ENCODE measurements at regions of chr19 and their contacts with region 1.

Region 1: GRCh38 chr19:11587302-11587974 is 9.8 kb upstream of the ZNF627 start:
- DNase-seq: peak; percentile 88
- ATAC-seq: peak; percentile 75
- H3K4me3 ChIP-seq: no peak overlapping the region
- H3K4me3 Mint-ChIP-seq: no peak overlapping the region
- H3K27ac ChIP-seq: no peak overlapping the region
- H3K27ac Mint-ChIP-seq: peak overlapping the region; percentile 32
- H3K4me1 ChIP-seq: peaks cover 34 to 51% of the 10 kb centered on the region in 2 donors
- H3K4me1 Mint-ChIP-seq: peaks cover 39% of the 10 kb centered on the region
- H3K27me3 ChIP-seq: no peaks in the 10 kb centered on the region
- H3K27me3 Mint-ChIP-seq: no peaks in the 10 kb centered on the region
- CTCF ChIP-seq: peak; percentile 82

Region 2: DNA sequence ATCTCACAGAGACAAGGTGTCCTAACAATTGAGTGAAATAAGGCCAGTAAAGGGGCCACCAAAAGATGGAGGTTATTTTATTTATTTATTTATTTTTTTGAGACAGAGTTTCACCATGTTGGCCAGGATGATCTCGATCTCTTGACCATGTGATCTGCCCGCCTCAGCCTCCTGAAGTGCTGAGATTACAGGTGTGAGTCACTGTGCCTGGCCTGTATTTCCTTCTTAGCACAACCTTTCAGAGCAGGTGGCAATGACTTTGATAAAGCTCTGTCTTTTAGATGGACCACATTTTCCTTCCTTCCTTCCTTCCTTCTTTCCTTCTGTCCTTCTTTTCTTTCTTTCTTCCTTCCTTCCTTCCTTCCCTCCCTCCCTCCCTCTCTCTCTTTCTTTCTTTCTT is 314.1 kb before region 1 on chr19:
- CTCF ChIA-PET with region 1: no interaction called
- POLR2A ChIA-PET with region 1: no interaction called
- intact Hi-C with region 1: no loop called
- DNase-seq: no peak
- ATAC-seq: no peak
- H3K4me3 ChIP-seq: no peak overlapping the region
- H3K4me3 Mint-ChIP-seq: no peak overlapping the region
- H3K27ac ChIP-seq: no peak overlapping the region
- H3K27ac Mint-ChIP-seq: no peak overlapping the region
- H3K4me1 ChIP-seq: no peaks in the 10 kb centered on the region
- H3K4me1 Mint-ChIP-seq: no peaks in the 10 kb centered on the region
- H3K27me3 ChIP-seq: peaks cover 0 to 9% (median 2%) of the 10 kb centered on the region in 4 experiments
- H3K27me3 Mint-ChIP-seq: peaks cover 18% of the 10 kb centered on the region
- CTCF ChIP-seq: no peak

Region 3: DNA sequence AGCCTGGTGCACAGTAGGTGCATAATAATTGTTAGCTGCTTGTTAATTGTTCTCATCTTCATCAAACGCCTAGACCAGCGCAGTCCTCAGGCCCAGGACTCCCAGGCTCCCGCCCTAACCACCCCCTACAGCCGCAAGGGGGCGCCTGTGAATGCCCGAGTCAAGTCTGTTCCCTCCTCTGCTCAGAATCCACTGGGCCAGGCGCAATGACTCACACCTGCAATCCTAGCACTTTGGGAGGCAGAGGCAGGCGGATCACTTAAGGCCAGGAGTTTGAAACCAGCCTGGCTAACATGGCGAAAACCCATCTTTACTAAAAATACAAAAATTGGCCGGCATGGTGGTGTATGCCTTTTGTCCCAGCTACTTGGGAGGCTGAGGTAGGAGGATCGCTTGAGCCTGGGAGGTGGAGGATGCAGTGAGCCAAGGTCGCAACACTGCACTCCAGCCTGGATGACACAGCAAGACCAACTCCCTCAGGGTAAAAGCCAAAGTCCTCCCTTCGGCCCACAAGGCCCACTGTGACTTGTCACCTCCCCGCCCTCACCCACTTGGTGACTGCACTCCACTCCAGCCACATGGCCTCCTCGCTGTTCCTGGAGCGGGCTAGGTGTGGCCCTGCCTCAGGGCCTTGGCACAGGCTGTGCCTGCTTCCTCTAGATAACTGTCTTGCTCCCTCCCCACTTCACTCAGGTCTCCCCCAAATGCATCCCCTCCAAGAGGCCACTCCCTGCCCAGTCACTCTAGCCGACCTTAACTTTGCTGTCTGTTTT is 90.9 kb before region 1 on chr19:
- CTCF ChIA-PET with region 1: interaction called, 4 read pairs
- POLR2A ChIA-PET with region 1: no interaction called
- intact Hi-C with region 1: loop called (anchors 1 kb)
- DNase-seq: peak; percentile 67
- ATAC-seq: peak; percentile 72
- H3K4me3 ChIP-seq: no peak overlapping the region
- H3K4me3 Mint-ChIP-seq: no peak overlapping the region
- H3K27ac ChIP-seq: no peak overlapping the region
- H3K27ac Mint-ChIP-seq: no peak overlapping the region
- H3K4me1 ChIP-seq: no peaks in the 10 kb centered on the region
- H3K4me1 Mint-ChIP-seq: no peaks in the 10 kb centered on the region
- H3K27me3 ChIP-seq: no peaks in the 10 kb centered on the region
- H3K27me3 Mint-ChIP-seq: no peaks in the 10 kb centered on the region
- CTCF ChIP-seq: peak; percentile 70

Region 4: DNA sequence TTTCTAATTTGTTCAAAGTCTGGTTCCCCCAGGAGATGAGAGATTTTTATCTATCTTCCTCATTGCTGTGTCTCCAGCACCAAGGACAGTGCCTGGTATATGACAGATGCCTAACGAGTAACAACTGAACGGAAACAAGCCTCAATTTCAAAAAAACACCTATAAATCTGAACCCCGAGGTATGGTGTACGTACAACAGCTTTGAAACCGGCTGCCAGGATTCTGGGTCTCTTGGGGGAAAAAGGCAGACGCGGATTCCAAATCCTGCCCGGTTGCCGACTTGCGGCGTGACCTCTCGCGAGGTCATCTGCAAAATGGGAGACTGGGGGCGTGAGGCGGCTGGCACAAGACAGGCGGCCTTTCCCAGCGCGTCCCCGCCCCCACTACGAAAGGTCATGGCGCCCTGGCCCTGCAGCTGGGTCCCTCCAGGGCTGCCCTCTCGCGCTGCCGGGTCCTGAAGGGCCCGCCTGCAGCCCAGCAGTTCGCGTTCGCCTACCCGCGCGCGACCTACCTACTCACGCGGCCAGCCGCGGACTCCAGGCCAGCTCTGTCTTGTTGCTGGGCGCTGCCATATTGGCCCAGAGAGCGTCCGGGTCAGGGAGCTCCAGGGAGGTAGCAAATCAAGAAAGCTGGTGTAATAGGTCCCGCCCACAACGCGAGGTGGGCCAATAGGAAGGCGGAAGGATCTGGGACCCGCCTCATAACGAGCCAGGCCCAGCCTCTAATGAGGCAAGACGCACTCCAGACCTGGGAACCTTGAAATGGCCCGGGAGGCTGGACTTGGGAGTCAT is 58.7 kb before region 1 on chr19 and contains the start of gene ECSIT:
- CTCF ChIA-PET with region 1: interaction called, 3 read pairs
- POLR2A ChIA-PET with region 1: interaction called, 12 read pairs
- intact Hi-C with region 1: no loop called
- DNase-seq: peak; percentile 95
- ATAC-seq: peak; percentile 99
- H3K4me3 ChIP-seq: peak within 1 kb of the TSS; percentile 45 to 83 (median 79)
- H3K4me3 Mint-ChIP-seq: peak within 1 kb of the TSS; percentile 98
- H3K27ac ChIP-seq: peak within 1 kb of the TSS; percentile 58 to 79
- H3K27ac Mint-ChIP-seq: peak within 1 kb of the TSS; percentile 95
- H3K4me1 ChIP-seq: peaks cover 7 to 19% of the 10 kb centered on the region in 2 donors
- H3K4me1 Mint-ChIP-seq: peaks cover 16% of the 10 kb centered on the region
- H3K27me3 ChIP-seq: no peaks in the 10 kb centered on the region
- H3K27me3 Mint-ChIP-seq: no peaks in the 10 kb centered on the region
- CTCF ChIP-seq: no peak
- total RNA-seq, gene ECSIT: 45.6 and 56.7 TPM in 2 replicates

Region 5: DNA sequence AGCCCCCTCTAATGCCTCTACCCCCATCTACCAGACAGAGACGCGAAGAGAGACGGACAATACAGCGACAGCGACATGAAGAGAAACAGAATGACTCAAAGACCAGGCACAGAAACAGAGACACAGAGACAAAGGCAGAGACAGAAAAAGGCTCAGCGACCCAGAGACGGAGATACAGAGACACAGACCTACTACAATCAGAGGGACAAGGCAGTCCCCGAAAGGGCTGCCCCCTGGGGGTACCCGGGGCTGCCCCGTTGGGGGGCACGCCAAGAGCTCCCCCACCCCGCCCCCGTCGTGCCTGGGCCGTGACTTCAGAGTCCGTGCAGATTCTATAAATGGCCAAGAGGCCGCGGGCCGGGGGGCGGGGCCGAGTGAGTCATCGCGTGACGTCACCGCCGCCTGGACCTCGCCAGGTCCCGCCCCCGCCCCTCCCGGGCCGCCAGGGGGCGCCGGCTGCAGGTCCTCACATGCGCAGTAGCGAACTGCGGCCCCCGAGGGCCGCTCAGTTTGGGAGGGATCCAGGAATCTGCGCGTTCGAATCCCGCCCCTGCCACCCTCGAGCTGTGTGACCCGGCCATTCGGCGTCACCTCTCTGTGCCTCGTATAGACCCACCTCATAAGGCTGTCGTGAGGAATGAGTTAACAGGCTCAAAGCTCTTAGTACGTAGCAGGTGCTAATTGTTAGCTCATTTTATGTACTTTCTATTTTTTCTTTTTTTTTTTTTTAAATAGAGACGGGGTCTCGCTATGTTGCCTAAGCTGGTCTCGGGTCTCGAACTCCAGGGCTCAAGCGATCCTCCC is 51.4 kb before region 1 on chr19:
- CTCF ChIA-PET with region 1: interaction called, 11 read pairs
- POLR2A ChIA-PET with region 1: interaction called, 7 read pairs
- intact Hi-C with region 1: loop called (anchors 1 kb)
- DNase-seq: peak; percentile 91
- ATAC-seq: peak; percentile 90
- H3K4me3 ChIP-seq: peak overlapping the region in 4 of 5 experiments; percentile 17 to 59 (median 39)
- H3K4me3 Mint-ChIP-seq: peak overlapping the region; percentile 74
- H3K27ac ChIP-seq: peak overlapping the region; percentile 66 to 70
- H3K27ac Mint-ChIP-seq: peak overlapping the region; percentile 71
- H3K4me1 ChIP-seq: peaks cover 24 to 33% of the 10 kb centered on the region in 2 donors
- H3K4me1 Mint-ChIP-seq: peaks cover 22% of the 10 kb centered on the region
- H3K27me3 ChIP-seq: peaks cover 0 to 30% (median 12%) of the 10 kb centered on the region in 4 experiments
- H3K27me3 Mint-ChIP-seq: peaks cover 13% of the 10 kb centered on the region
- CTCF ChIP-seq: peak; percentile 91

Region 6: DNA sequence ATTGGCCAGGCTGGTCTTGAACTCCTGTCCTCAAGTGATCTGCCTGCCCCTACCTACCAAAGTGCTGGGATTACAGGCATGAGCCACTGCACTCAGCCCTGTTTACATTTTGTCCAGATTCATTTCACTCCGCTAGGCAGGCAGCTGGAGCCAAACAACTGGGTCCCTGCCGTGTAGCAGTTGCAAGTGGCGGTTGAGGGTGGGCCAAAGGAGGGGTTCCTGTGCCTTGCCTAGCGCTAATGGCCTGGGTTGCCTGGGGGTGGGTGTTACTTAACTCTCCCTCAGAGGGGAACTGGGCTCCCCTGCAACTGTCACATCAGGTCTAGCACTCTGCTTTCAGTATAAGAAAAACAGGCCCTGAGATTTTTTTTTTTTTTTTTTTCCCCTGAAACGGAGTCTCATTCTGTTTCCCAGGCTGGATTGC is 17.4 kb before region 1 on chr19:
- CTCF ChIA-PET with region 1: interaction called, 61 read pairs
- POLR2A ChIA-PET with region 1: interaction called, 63 read pairs
- intact Hi-C with region 1: no loop called
- DNase-seq: peak; percentile 45
- ATAC-seq: no peak
- H3K4me3 ChIP-seq: no peak overlapping the region
- H3K4me3 Mint-ChIP-seq: no peak overlapping the region
- H3K27ac ChIP-seq: peak overlapping the region in 1 of 2 donors; percentile 5
- H3K27ac Mint-ChIP-seq: peak overlapping the region; percentile 85
- H3K4me1 ChIP-seq: peaks cover 47 to 75% of the 10 kb centered on the region in 2 donors
- H3K4me1 Mint-ChIP-seq: peaks cover 49% of the 10 kb centered on the region
- H3K27me3 ChIP-seq: no peaks in the 10 kb centered on the region
- H3K27me3 Mint-ChIP-seq: no peaks in the 10 kb centered on the region
- CTCF ChIP-seq: no peak

Region 7: DNA sequence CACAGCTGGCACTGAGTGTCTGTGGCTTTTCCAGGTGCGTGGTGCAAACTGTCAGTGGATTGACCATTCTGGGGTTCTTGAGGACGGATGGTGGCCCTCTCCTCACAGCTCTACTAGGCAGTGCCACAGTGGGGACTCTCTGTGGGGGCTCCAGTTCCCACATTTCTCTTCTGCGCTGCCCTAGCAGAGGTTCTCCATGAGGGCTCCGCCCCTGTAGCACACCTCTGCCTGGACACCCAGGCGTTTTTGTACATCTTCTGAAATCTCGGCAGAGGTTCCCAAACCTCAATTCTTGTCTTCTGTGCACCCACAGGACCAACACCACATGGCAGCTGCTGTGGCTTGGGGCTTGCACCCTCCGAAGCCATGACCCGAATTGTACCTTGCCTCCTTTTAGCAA is 19.0 kb after region 1 on chr19:
- CTCF ChIA-PET with region 1: no interaction called
- POLR2A ChIA-PET with region 1: no interaction called
- intact Hi-C with region 1: no loop called
- DNase-seq: no peak
- ATAC-seq: no peak
- H3K4me3 ChIP-seq: no peak overlapping the region
- H3K4me3 Mint-ChIP-seq: no peak overlapping the region
- H3K27ac ChIP-seq: no peak overlapping the region
- H3K27ac Mint-ChIP-seq: no peak overlapping the region
- H3K4me1 ChIP-seq: no peaks in the 10 kb centered on the region
- H3K4me1 Mint-ChIP-seq: peaks cover 11% of the 10 kb centered on the region
- H3K27me3 ChIP-seq: no peaks in the 10 kb centered on the region
- H3K27me3 Mint-ChIP-seq: no peaks in the 10 kb centered on the region
- CTCF ChIP-seq: no peak

Region 8: GRCh38 chr19:11657307-11657706 is 69.9 kb after region 1 on chr19:
- CTCF ChIA-PET with region 1: no interaction called
- POLR2A ChIA-PET with region 1: no interaction called
- intact Hi-C with region 1: no loop called
- DNase-seq: no peak
- ATAC-seq: no peak
- H3K4me3 ChIP-seq: no peak overlapping the region
- H3K4me3 Mint-ChIP-seq: no peak overlapping the region
- H3K27ac ChIP-seq: no peak overlapping the region
- H3K27ac Mint-ChIP-seq: no peak overlapping the region
- H3K4me1 ChIP-seq: no peaks in the 10 kb centered on the region
- H3K4me1 Mint-ChIP-seq: no peaks in the 10 kb centered on the region
- H3K27me3 ChIP-seq: no peaks in the 10 kb centered on the region
- H3K27me3 Mint-ChIP-seq: peaks cover 4% of the 10 kb centered on the region
- CTCF ChIP-seq: no peak

Region 9: GRCh38 chr19:11987405-11988281 is 400.2 kb after region 1 on chr19:
- CTCF ChIA-PET with region 1: no interaction called
- POLR2A ChIA-PET with region 1: no interaction called
- intact Hi-C with region 1: no loop called
- DNase-seq: peak; percentile 93
- ATAC-seq: peak; percentile 93
- H3K4me3 ChIP-seq: peak overlapping the region; percentile 86 to 98 (median 97)
- H3K4me3 Mint-ChIP-seq: peak overlapping the region; percentile 96
- H3K27ac ChIP-seq: peak overlapping the region; percentile 85 to 92
- H3K27ac Mint-ChIP-seq: peak overlapping the region; percentile 89
- H3K4me1 ChIP-seq: peaks cover 0 to 5% of the 10 kb centered on the region in 2 donors
- H3K4me1 Mint-ChIP-seq: peaks cover 24% of the 10 kb centered on the region
- H3K27me3 ChIP-seq: no peaks in the 10 kb centered on the region
- H3K27me3 Mint-ChIP-seq: no peaks in the 10 kb centered on the region
- CTCF ChIP-seq: no peak